PC-3 (cell line): ENCODE measurements at regions of chr13 and their contacts with region 1.

Region 1: GRCh38 chr13:106536244-106537034 is 977 bp upstream of the EFNB2 start:
- DNase-seq: peak; percentile 85
- ATAC-seq: peak; percentile 27
- H3K4me3 ChIP-seq: peak overlapping the region; percentile 79
- H3K27ac ChIP-seq: no peak overlapping the region
- H3K4me1 ChIP-seq: peaks cover 6% of the 10 kb centered on the region; the same call in 1 of the 2 replicates
- H3K27me3 ChIP-seq: no peaks in the 10 kb centered on the region
- CTCF ChIP-seq: peak; percentile 89

Region 2: DNA sequence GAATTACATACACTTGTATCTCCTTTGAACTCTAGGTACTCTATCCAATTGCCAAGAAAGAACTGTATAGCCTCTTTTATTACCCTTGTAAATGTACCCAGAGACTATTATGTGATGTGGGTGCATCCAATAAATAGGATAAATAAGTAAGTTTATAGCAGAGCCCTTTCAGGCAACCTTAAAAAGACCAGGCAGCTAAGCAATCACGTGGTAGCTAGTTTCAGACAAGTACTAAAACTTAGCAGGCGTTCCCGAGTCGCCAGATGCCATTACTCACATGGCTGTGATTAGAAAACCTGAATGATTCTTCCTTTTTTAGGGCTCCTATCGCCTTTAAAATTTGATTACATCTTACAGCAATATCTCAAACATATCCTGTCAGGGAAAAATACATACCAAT is 1304.0 kb before region 1 on chr13:
- CTCF ChIA-PET with region 1: no interaction called
- POLR2A ChIA-PET with region 1: no interaction called
- intact Hi-C with region 1: loop called (anchors 5 kb)
- DNase-seq: no peak
- ATAC-seq: no peak; the same call in 1 of the 2 replicates
- H3K4me3 ChIP-seq: no peak overlapping the region
- H3K27ac ChIP-seq: no peak overlapping the region
- H3K4me1 ChIP-seq: no peaks in the 10 kb centered on the region
- H3K27me3 ChIP-seq: no peaks in the 10 kb centered on the region
- CTCF ChIP-seq: no peak

Region 3: GRCh38 chr13:105627270-105627669 is 909.2 kb before region 1 on chr13:
- CTCF ChIA-PET with region 1: no interaction called
- POLR2A ChIA-PET with region 1: no interaction called
- intact Hi-C with region 1: no loop called
- DNase-seq: peak; percentile 25
- ATAC-seq: peak; percentile 71
- H3K4me3 ChIP-seq: no peak overlapping the region
- H3K27ac ChIP-seq: no peak overlapping the region
- H3K4me1 ChIP-seq: no peaks in the 10 kb centered on the region
- H3K27me3 ChIP-seq: no peaks in the 10 kb centered on the region
- CTCF ChIP-seq: no peak

Region 4: GRCh38 chr13:105817021-105817420 is 719.4 kb before region 1 on chr13:
- CTCF ChIA-PET with region 1: no interaction called
- POLR2A ChIA-PET with region 1: no interaction called
- intact Hi-C with region 1: loop called (anchors 5 kb)
- DNase-seq: peak; percentile 38
- ATAC-seq: peak; percentile 40; the same call in 1 of the 2 replicates
- H3K4me3 ChIP-seq: no peak overlapping the region
- H3K27ac ChIP-seq: no peak overlapping the region
- H3K4me1 ChIP-seq: peaks cover 10% of the 10 kb centered on the region; the same call in 1 of the 2 replicates
- H3K27me3 ChIP-seq: no peaks in the 10 kb centered on the region
- CTCF ChIP-seq: no peak

Region 5: DNA sequence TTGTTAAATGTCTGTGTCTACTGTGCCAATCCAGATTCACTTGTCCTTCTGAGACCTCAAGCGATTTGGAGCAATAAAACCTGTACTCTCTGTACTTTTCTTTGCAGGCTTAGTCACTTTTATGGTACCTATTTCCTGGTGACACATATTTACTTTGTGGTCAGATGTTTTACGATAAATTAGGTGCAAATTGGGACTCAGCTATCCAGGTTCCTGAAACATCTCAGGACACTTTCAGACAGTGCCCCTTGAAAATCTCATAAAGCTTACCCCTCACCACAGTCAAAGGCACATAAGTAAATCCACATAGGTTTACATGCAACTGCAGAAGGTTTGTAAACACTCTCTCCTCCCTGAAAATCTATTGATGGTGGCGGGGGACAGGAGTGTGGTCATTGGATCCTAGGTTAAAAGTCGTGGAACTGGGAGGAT is 439.8 kb before region 1 on chr13:
- CTCF ChIA-PET with region 1: no interaction called
- POLR2A ChIA-PET with region 1: no interaction called
- intact Hi-C with region 1: loop called (anchors 2 kb)
- DNase-seq: peak; percentile 90
- ATAC-seq: peak; percentile 72
- H3K4me3 ChIP-seq: peak overlapping the region; percentile 34; the same call in 1 of the 2 replicates
- H3K27ac ChIP-seq: peak overlapping the region; percentile 95
- H3K4me1 ChIP-seq: peaks cover 65% of the 10 kb centered on the region
- H3K27me3 ChIP-seq: no peaks in the 10 kb centered on the region
- CTCF ChIP-seq: no peak

Region 6: DNA sequence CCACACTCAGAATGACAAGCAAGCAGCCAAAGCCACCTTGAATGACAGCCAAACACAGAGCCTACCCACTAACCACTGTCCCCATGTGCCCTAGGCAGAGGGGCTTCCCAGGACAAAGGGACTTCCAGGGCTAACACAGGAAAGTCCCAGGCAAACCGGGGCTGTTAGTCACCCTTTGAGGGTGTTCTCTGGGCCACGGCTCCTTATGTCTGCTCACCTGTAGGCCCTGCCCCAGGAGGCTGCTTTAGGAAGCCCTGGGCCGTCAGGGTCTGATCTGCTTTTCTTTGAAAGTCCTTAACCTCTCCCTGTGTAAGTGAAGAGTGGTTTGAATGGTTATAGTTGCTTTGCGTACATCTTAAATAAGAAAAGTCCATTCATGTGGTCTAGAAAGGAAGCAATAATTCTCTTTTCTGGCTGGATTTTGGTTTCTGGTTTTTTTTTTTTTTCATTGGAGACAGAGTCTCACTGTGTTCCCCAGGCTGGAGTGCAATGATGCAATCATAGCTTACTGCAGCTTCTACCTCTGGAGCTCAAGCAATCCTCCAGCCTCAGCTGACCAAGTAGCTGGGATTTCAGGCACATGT is 162.4 kb before region 1 on chr13:
- CTCF ChIA-PET with region 1: no interaction called
- POLR2A ChIA-PET with region 1: no interaction called
- intact Hi-C with region 1: loop called (anchors 5 kb)
- DNase-seq: no peak
- ATAC-seq: no peak
- H3K4me3 ChIP-seq: no peak overlapping the region
- H3K27ac ChIP-seq: no peak overlapping the region
- H3K4me1 ChIP-seq: peaks cover 22% of the 10 kb centered on the region
- H3K27me3 ChIP-seq: no peaks in the 10 kb centered on the region
- CTCF ChIP-seq: no peak